CD14-positive monocyte (primary cell): ENCODE measurements at regions of chr7 and their contacts with region 1.

Region 1: GRCh38 chr7:99331002-99331401 is 5.3 kb downstream of the ARPC1A start:
- DNase-seq: peak in 2 of 3 donors; percentile 4 to 29
- H3K4me3 ChIP-seq: peak overlapping the region in 1 of 3 experiments; percentile 24
- H3K4me3 Mint-ChIP-seq: no peak overlapping the region
- H3K27ac ChIP-seq: peak overlapping the region; percentile 71 to 81
- H3K27ac Mint-ChIP-seq: peak overlapping the region; percentile 88 to 97 (median 95)
- H3K4me1 ChIP-seq: peaks cover 47 to 63% of the 10 kb centered on the region in 2 donors
- H3K4me1 Mint-ChIP-seq: peaks cover 53% of the 10 kb centered on the region
- H3K27me3 ChIP-seq: no peaks in the 10 kb centered on the region
- H3K27me3 Mint-ChIP-seq: no peaks in the 10 kb centered on the region
- CTCF ChIP-seq: no peak

Region 2: DNA sequence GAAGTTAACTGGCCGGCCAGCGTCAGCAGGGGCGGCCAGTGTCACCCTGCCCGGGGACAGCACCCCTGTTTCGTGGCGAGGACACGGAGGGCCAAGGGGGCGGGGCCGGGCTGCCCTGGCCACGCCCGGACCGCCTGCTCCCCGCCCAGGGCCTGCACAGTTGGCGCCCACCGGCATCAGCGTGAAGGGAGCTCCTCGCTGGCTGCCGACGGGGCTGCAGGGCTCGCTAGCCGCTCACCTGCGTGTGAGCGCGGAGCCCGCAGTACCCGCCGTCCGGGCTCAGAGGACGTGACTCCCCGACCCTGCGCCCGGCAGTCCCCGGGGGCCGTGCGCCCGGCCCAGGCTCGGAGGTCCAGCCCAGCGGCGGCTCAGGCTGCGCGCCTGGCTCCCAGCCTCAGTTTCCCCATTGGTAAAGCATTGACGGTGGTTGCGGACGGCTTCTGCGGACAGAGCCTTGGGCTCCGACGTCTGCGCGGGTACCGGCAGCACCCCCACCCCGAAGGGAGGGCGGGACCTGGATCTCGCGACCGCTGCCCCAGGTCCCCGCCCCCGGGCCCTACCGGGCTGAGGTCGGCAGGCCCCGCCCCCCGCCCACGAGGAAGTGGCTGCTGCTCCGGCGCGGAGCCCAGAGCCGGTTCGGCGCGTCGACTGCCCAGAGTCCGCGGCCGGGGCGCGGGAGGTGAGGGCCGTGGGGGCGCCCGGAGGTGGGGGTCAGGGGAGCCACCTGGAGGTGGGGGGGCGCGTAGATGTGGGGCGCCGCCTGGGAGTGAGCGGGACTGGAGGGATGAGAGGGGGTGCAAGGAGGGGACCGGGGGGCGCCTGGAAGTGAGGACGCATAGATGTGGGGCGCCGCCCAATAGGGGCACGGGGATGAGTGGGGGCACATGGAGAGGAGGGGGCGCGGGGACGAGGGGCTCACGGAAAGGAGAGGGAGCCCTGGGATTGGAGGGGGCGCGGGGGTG is 43.4 kb after region 1 on chr7 and contains the start of gene ARPC1B:
- intact Hi-C with region 1: loop called in 1 of 2 experiments (anchors 5 kb)
- DNase-seq: peak; percentile 81 to 84 (median 82)
- H3K4me3 ChIP-seq: peak within 1 kb of the TSS; percentile 82 to 95 (median 89)
- H3K4me3 Mint-ChIP-seq: peak within 1 kb of the TSS; percentile 82 to 89
- H3K27ac ChIP-seq: peak within 1 kb of the TSS; percentile 94
- H3K27ac Mint-ChIP-seq: peak within 1 kb of the TSS; percentile 94 to 100 (median 99)
- H3K4me1 ChIP-seq: peaks cover 46 to 58% of the 10 kb centered on the region in 2 donors
- H3K4me1 Mint-ChIP-seq: peaks cover 50% of the 10 kb centered on the region
- H3K27me3 ChIP-seq: no peaks in the 10 kb centered on the region
- H3K27me3 Mint-ChIP-seq: peaks cover 0 to 2% (median 0%) of the 10 kb centered on the region in 3 donors
- CTCF ChIP-seq: no peak
- polyA plus RNA-seq, gene ARPC1B: 1,179 to 1,362 (median 1,282) TPM